HAP-1 (cell line): ENCODE measurements at regions of chr21 and their contacts with region 1.

Region 1: GRCh38 chr21:43939443-43940328 is 72.4 kb upstream of the TRAPPC10 start:
- DNase-seq: no peak
- H3K4me3 ChIP-seq: no peak overlapping the region
- H3K4me1 ChIP-seq: peaks cover 4% of the 10 kb centered on the region; the same call in 1 of the 2 replicates
- H3K27me3 ChIP-seq: no peaks in the 10 kb centered on the region

Region 2: DNA sequence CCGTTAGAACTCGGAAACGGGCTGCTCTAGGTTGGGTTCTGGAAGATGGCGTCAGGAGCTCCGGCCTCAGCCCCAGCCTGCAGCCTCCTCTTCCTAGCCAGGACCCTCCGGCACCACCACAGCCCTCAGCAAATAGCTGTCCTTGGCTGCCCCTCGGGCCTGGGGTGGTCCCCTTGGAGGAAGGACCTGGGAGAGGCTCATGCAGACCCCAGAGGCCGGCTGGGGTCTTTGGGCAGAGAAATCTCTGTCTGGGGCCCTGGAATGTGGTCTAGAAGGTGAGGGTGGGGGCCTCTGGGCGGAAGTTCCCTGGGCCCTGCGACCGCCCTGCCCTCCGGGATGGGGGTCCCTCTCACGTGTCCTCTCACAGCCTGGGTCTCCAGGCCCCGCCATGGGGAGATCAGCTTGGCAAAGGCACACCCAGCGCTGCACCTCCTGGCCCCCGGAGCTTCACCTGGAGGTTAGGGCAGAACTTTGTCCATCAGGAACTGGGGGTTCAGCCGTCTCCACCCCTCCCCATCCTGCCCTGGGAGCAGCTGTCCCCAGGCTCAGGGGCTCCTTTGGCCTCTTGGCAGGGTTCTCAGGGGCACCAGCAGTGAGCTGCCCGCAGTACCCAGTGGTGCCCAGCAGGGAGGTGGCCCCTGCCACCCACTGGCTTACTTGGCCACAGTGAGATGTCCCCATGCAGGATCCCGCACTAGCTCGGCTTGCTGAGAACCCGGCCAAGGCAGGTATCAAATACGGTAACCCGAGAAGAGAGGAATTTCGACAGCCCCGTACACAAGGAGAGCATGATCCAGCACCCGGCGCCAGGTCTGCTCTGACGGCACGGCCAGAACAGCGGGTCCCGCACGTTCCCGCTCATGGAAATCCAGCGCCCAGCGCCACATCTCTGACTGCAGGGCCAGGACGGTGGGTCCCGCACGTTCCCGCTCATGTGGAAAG is 113.7 kb before region 1 on chr21:
- in situ Hi-C with region 1: loop called (anchors 10 kb)
- DNase-seq: no peak
- H3K4me3 ChIP-seq: no peak overlapping the region
- H3K4me1 ChIP-seq: no peaks in the 10 kb centered on the region
- H3K27me3 ChIP-seq: no peaks in the 10 kb centered on the region